Activated CD8-positive, alpha-beta T cell treated with anti-CD3 and anti-CD28 coated beads, Interleukin-2, amount 10 ng/mL, durations not matched to agents 7 days and 5 days (primary cell): ENCODE measurements at regions of chr2 and their contacts with region 1.

Region 1: DNA sequence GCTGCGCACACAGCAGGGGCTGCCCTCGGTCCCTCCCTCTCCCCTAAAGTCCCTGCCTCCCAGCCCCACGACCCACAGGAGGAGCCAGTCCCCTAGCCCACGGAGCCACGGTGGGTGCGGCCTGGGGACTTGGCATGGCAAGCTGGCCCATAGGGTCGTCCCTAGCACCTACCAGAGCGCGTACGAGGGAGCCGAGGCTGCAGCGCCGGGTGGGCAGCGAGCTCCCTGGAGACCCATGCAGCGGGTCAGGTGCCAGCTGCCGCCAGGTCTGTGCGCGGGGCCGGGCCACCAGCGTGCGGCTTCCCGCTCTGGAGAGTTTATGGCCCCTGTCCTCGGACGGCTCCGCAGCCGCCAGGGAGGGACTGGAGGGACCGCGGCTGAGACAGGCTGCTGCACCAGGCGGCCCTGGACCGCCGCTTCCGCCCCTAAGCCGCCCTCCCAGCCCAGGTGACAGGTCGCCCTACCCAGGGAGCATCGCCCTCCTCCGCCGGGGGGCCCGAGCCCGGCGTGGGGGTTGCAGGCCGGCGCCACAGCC is 273.6 kb downstream of the CCDC74A start:
- DNase-seq: no peak
- ATAC-seq: no peak
- H3K4me3 Mint-ChIP-seq: no peak overlapping the region
- H3K27ac Mint-ChIP-seq: no peak overlapping the region
- H3K4me1 Mint-ChIP-seq: no peaks in the 10 kb centered on the region
- H3K27me3 Mint-ChIP-seq: peaks cover 6% of the 10 kb centered on the region

Region 2: GRCh38 chr2:131682122-131682944 is 118.9 kb before region 1 on chr2:
- CTCF ChIA-PET with region 1: interaction called, 10 read pairs
- POLR2A ChIA-PET with region 1: no interaction called
- DNase-seq: peak; percentile 83
- ATAC-seq: peak; percentile 100
- H3K4me3 Mint-ChIP-seq: peak overlapping the region; percentile 81
- H3K27ac Mint-ChIP-seq: peak overlapping the region; percentile 78
- H3K4me1 Mint-ChIP-seq: peaks cover 39% of the 10 kb centered on the region
- H3K27me3 Mint-ChIP-seq: peaks cover 7% of the 10 kb centered on the region